ENCODE measurements at regions of chr1 and their contacts with region 1.

Region 1: DNA sequence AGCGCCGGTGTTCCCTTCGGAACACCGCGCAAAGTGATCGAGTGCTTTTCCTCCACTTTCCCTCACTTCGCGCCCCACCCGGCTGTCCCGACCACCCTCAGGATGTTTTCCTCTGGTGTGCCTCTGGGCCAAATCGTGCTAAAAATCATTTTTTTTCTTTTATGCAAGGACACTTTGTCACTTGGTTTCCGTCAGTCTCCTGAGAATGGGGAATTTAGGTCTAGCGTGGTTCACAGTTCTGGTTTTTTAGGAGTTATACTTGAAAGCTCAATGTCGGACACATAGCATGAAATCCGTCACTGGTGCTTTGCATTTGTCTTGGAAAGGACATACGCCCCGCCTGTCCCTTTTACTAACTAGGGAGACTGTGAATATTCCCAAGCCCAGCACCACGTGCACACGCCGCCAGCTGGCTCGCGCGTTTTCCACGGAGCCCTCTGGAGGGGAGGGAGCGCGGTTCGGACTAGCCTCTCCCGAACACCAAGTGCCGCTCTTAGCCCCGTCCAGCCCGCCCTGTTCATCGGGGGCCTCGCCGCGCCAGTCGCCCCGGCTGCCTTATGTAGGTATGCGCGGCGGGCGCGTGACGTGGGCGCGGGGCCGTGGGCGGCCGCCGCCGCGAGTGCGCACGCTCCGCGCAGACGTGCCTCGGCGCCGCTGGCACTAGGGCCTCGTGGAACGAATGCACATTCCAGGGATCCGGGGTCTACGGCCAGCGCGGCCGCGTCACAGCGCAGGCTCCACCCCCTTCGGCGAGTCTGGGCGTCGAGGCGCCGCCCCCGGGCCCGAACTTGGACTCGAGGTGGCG is 572 bp upstream of the IRF2BP2 start:
- DNase-seq: peak; percentile 81

Region 2: DNA sequence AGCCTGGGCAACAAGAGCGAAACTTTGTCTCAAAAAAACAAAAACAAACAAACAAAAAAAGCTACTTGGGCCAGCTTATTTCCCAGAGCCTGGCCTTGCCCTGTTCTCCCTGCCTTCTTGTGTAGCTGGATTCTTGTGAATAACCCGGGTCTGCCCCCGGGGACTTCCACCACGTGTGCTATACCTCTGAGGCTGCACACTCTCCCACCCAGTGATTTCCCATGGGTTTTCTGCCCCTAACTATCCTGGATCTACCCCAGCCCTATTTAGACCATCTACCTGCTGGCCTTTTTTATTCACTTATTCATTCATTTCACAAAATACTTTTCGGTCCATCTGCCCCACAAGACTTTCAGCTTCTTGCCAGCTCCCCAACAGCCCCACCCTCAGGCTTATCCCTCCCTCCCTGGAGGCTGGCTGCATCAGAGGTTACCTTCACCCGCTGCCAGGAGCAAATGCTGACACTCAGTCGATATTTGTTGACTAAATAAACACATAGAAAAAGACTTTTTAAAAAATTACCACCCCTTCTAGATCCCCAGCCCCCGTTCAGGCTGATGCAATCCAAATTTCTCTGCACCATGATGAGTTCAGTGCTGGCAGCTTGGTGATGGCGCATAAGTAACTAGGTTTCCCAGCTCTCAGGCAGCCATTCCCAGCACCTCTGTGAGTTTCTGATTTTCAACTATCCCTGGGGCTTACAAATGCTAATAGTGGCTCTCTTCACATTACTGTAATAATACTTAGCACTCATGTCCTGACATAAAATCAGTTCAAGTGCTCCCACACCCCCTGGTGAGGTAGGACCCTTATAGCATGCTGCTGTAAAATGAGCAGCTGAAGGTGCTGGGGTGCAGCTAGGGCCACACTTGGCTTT is 100.9 kb before region 1 on chr1:
- CTCF ChIA-PET with region 1: interaction called, 6 read pairs
- POLR2A ChIA-PET with region 1: interaction called, 29 read pairs
- DNase-seq: no peak

Region 3: GRCh38 chr1:234599617-234600417 is 10.7 kb before region 1 on chr1:
- CTCF ChIA-PET with region 1: interaction called, 4 read pairs
- POLR2A ChIA-PET with region 1: interaction called, 81 read pairs
- DNase-seq: peak; percentile 74

Region 4: DNA sequence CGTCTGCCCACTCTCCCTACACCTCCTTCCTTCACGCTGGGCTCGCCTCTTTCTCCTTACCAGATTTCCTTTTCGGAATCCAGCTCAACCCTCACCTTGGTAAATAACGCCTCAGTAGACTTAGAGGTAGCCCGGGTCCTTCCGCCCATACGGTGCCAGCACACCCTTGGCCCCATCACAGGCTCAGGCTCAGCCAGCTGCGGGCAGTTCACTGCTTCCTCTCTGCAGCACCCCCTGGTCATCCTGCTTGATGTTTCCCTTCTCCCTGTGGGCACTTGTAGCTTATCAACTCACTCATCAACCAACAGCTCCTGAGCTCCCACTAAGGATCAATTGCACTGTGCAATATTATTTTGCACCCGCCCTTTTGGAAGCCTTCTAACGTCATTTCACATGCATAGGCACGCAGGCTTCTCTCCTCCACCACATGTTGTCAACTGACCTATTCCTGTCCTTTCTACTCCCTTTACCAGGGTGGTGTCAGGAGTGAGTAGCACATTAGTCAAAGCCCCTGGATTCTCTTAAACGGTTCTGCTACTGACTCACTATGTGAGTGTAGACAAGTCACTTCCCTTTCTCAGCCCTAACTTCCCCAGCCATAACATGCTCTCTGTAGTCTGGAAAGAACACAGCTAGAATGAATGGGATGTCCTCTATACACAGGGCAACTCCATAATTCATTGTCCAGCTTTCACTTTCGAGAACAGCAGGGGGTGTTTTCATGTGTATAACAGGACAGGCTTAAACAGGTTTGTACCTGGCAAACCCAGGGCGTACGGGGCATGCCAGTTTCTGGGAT is 46.5 kb after region 1 on chr1:
- CTCF ChIA-PET with region 1: no interaction called
- POLR2A ChIA-PET with region 1: interaction called, 15 read pairs
- DNase-seq: no peak

Region 5: GRCh38 chr1:234722904-234723720 is 112.6 kb after region 1 on chr1:
- CTCF ChIA-PET with region 1: interaction called, 5 read pairs
- POLR2A ChIA-PET with region 1: interaction called, 154 read pairs
- DNase-seq: no peak

Region 6: DNA sequence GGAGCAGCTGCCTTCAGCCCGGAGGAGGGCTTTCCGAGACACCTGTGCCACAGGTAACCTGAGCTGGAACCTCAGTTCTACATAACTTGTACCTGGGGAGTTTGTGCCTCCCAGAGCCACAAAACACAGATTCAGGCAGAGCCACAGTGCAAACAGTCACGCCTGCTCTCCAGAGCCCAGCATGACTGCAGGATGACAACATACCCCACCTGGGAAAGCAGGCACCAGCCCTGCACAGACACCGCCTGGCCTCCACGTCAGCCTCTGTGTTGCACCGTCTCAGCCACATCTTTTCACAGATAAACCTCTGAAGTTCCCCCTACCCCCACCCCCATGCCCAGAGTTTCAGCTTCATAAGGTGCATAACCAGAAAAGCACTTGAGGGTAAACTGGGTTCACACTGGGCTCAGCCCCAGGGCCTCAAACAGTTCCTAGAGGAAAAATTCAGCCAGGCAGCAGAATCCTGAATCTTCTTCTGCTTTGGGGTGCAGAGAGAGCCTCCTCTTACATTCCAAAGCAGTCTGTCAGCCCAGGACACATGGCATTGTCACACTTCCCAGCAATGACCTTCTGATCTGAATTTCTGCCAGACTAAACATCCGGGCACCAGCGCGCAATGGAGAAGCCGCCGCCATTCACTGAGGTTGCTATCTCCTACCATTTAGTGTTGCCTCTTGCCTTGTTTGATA is 288.6 kb after region 1 on chr1:
- CTCF ChIA-PET with region 1: no interaction called
- POLR2A ChIA-PET with region 1: no interaction called
- DNase-seq: no peak

Region 7: GRCh38 chr1:234970731-234971476 is 360.4 kb after region 1 on chr1:
- CTCF ChIA-PET with region 1: interaction called, 3 read pairs
- POLR2A ChIA-PET with region 1: interaction called, 16 read pairs
- DNase-seq: no peak